OCI-LY7 (cell line): ENCODE measurements at regions of chr2 and their contacts with region 1.

Region 1: GRCh38 chr2:75403991-75404428 is 156.7 kb downstream of the EVA1A start:
- DNase-seq: peak; percentile 59
- H3K4me3 ChIP-seq: no peak overlapping the region
- H3K27ac ChIP-seq: no peak overlapping the region
- H3K4me1 ChIP-seq: no peaks in the 10 kb centered on the region
- CTCF ChIP-seq: peak; percentile 89

Region 2: GRCh38 chr2:74887445-74887951 is 516.5 kb before region 1 on chr2:
- CTCF ChIA-PET with region 1: no interaction called
- POLR2A ChIA-PET with region 1: no interaction called
- intact Hi-C with region 1: no loop called
- DNase-seq: no peak
- H3K4me3 ChIP-seq: no peak overlapping the region
- H3K27ac ChIP-seq: no peak overlapping the region
- H3K4me1 ChIP-seq: no peaks in the 10 kb centered on the region
- CTCF ChIP-seq: no peak

Region 3: GRCh38 chr2:74919827-74920226 is 484.2 kb before region 1 on chr2:
- CTCF ChIA-PET with region 1: no interaction called
- POLR2A ChIA-PET with region 1: no interaction called
- intact Hi-C with region 1: loop called (anchors 5 kb)
- DNase-seq: peak; percentile 62
- H3K4me3 ChIP-seq: peak overlapping the region; percentile 22
- H3K27ac ChIP-seq: no peak overlapping the region
- H3K4me1 ChIP-seq: no peaks in the 10 kb centered on the region
- CTCF ChIP-seq: peak; percentile 81

Region 4: GRCh38 chr2:75064691-75065396 is 339.2 kb before region 1 on chr2:
- CTCF ChIA-PET with region 1: no interaction called
- POLR2A ChIA-PET with region 1: no interaction called
- intact Hi-C with region 1: loop called (anchors 2 kb)
- DNase-seq: peak; percentile 51
- H3K4me3 ChIP-seq: no peak overlapping the region
- H3K27ac ChIP-seq: no peak overlapping the region
- H3K4me1 ChIP-seq: no peaks in the 10 kb centered on the region
- CTCF ChIP-seq: peak; percentile 98

Region 5: GRCh38 chr2:75098856-75099255 is 305.2 kb before region 1 on chr2:
- CTCF ChIA-PET with region 1: no interaction called
- POLR2A ChIA-PET with region 1: no interaction called
- intact Hi-C with region 1: loop called (anchors 10 kb)
- DNase-seq: peak; percentile 10
- H3K4me3 ChIP-seq: no peak overlapping the region
- H3K27ac ChIP-seq: no peak overlapping the region
- H3K4me1 ChIP-seq: no peaks in the 10 kb centered on the region
- CTCF ChIP-seq: peak; percentile 72

Region 6: DNA sequence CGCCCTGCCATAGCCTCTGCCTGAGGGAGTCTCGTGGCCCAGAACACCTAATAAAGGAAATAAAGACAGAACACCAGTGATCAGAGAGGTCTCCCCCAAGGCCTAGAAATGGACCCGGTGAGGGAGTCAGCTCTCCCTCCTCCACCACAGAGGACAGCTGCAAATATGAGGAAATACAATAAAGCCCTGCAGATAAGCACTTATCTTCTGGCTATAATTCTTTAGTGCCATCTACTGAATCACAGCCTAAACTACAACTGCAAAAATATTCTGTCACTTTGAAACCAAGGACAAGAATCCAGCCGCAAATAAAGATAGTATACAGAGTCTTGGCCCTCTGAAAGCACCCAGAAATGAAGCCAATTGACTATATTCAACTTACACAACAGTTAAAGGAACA is 162.3 kb before region 1 on chr2:
- CTCF ChIA-PET with region 1: no interaction called
- POLR2A ChIA-PET with region 1: no interaction called
- intact Hi-C with region 1: loop called (anchors 10 kb)
- DNase-seq: peak; percentile 21
- H3K4me3 ChIP-seq: no peak overlapping the region
- H3K27ac ChIP-seq: no peak overlapping the region
- H3K4me1 ChIP-seq: no peaks in the 10 kb centered on the region
- CTCF ChIP-seq: peak; percentile 79

Region 7: DNA sequence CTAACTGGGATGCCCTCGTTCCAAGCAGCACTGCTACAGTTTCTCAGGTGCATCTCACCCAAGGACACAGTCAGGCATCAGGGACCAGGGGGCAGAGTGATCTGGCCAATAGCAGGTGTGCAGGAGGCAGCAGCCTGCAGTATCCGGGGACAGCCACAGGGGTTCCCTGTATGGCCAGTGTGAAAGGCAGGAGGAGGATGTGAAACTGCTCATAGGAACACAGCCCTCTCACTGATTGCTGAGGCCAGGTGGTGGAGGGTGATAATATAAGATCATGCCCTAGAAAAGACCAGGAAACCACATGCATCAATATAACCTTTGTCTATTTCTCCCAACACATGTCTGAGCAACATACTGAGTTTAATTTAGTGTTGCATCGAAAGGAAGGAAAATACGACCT is 92.0 kb before region 1 on chr2:
- CTCF ChIA-PET with region 1: no interaction called
- POLR2A ChIA-PET with region 1: no interaction called
- intact Hi-C with region 1: loop called (anchors 1 kb)
- DNase-seq: peak; percentile 90
- H3K4me3 ChIP-seq: peak overlapping the region; percentile 0
- H3K27ac ChIP-seq: peak overlapping the region; percentile 27
- H3K4me1 ChIP-seq: peaks cover 25% of the 10 kb centered on the region
- CTCF ChIP-seq: peak; percentile 77

Region 8: GRCh38 chr2:75390169-75390568 is 13.8 kb before region 1 on chr2:
- CTCF ChIA-PET with region 1: no interaction called
- POLR2A ChIA-PET with region 1: no interaction called
- intact Hi-C with region 1: no loop called
- DNase-seq: no peak
- H3K4me3 ChIP-seq: no peak overlapping the region
- H3K27ac ChIP-seq: no peak overlapping the region
- H3K4me1 ChIP-seq: no peaks in the 10 kb centered on the region
- CTCF ChIP-seq: no peak

Region 9: GRCh38 chr2:75466708-75467311 is 62.8 kb after region 1 on chr2:
- CTCF ChIA-PET with region 1: no interaction called
- POLR2A ChIA-PET with region 1: no interaction called
- intact Hi-C with region 1: loop called (anchors 5 kb)
- DNase-seq: peak; percentile 43
- H3K4me3 ChIP-seq: no peak overlapping the region
- H3K27ac ChIP-seq: no peak overlapping the region
- H3K4me1 ChIP-seq: no peaks in the 10 kb centered on the region
- CTCF ChIP-seq: peak; percentile 90